Mammary epithelial cell (primary cell): ENCODE measurements at regions of chr7 and their contacts with region 1.

Region 1: GRCh38 chr7:48088559-48089045 is 463 bp upstream of the UPP1 start:
- DNase-seq: peak; percentile 92
- H3K4me3 ChIP-seq: peak overlapping the region; percentile 54 to 86 (median 62)
- H3K27ac ChIP-seq: peak overlapping the region; percentile 99
- H3K4me1 ChIP-seq: peaks cover 71% of the 10 kb centered on the region
- H3K27me3 ChIP-seq: no peaks in the 10 kb centered on the region
- CTCF ChIP-seq: no peak

Region 2: GRCh38 chr7:47600199-47601118 is 488.1 kb before region 1 on chr7:
- CTCF ChIA-PET with region 1: no interaction called
- dilution Hi-C with region 1: no loop called
- in situ Hi-C with region 1: no loop called
- intact Hi-C with region 1: loop called (anchors 5 kb)
- DNase-seq: peak; percentile 81
- H3K4me3 ChIP-seq: peak overlapping the region in 1 of 3 experiments; percentile 8
- H3K27ac ChIP-seq: peak overlapping the region; percentile 84
- H3K4me1 ChIP-seq: peaks cover 47% of the 10 kb centered on the region
- H3K27me3 ChIP-seq: no peaks in the 10 kb centered on the region
- CTCF ChIP-seq: no peak

Region 3: GRCh38 chr7:47979145-47979831 is 109.3 kb before region 1 on chr7 and contains the start of gene HUS1:
- CTCF ChIA-PET with region 1: no interaction called
- dilution Hi-C with region 1: loop called (anchors 5 kb)
- in situ Hi-C with region 1: loop called in 1 of 2 experiments (anchors 5 kb)
- intact Hi-C with region 1: loop called (anchors 1 kb)
- DNase-seq: peak; percentile 85
- H3K4me3 ChIP-seq: peak within 1 kb of the TSS; percentile 73 to 90 (median 78)
- H3K27ac ChIP-seq: peak within 1 kb of the TSS; percentile 50
- H3K4me1 ChIP-seq: peaks cover 10% of the 10 kb centered on the region
- H3K27me3 ChIP-seq: no peaks in the 10 kb centered on the region
- CTCF ChIP-seq: no peak
- total RNA-seq, gene HUS1: 31.3 to 36.8 TPM

Region 4: GRCh38 chr7:47991741-47992311 is 96.8 kb before region 1 on chr7:
- CTCF ChIA-PET with region 1: interaction called, 3 read pairs
- dilution Hi-C with region 1: no loop called
- in situ Hi-C with region 1: loop called in 1 of 2 experiments (anchors 5 kb)
- intact Hi-C with region 1: loop called (anchors 1 kb)
- DNase-seq: peak; percentile 52
- H3K4me3 ChIP-seq: peak overlapping the region; percentile 34 to 52 (median 35)
- H3K27ac ChIP-seq: no peak overlapping the region
- H3K4me1 ChIP-seq: peaks cover 7% of the 10 kb centered on the region
- H3K27me3 ChIP-seq: no peaks in the 10 kb centered on the region
- CTCF ChIP-seq: peak; percentile 32 to 62

Region 5: GRCh38 chr7:48035301-48035966 is 53.2 kb before region 1 on chr7 and contains the start of gene C7orf57:
- CTCF ChIA-PET with region 1: no interaction called
- dilution Hi-C with region 1: no loop called
- in situ Hi-C with region 1: loop called in 1 of 2 experiments (anchors 10 kb)
- intact Hi-C with region 1: loop called (anchors 2 kb)
- DNase-seq: peak; percentile 87
- H3K4me3 ChIP-seq: peak within 1 kb of the TSS; percentile 53 to 74 (median 61)
- H3K27ac ChIP-seq: peak within 1 kb of the TSS; percentile 33
- H3K4me1 ChIP-seq: peaks cover 15% of the 10 kb centered on the region
- H3K27me3 ChIP-seq: no peaks in the 10 kb centered on the region
- CTCF ChIP-seq: peak in 1 of 2 donors; percentile 25
- total RNA-seq, gene C7orf57: 0.67 to 2.0 TPM

Region 6: DNA sequence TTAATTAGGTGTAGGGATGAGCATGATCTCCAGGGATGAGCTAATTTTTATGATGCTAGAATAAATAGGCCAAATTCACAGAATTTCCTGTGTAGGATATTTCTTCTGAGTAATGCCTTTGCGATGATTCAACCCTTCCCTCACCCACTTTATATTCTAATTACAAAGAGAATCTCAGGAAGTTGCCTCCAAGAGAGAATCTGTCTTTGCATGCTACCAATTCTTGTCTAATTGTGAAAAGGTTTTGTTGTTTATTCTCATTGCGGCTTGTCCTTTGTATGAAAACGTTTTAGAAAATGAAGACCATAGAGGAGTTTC is 47.0 kb before region 1 on chr7:
- CTCF ChIA-PET with region 1: no interaction called
- dilution Hi-C with region 1: no loop called
- in situ Hi-C with region 1: loop called in 1 of 2 experiments (anchors 10 kb)
- intact Hi-C with region 1: loop called (anchors 2 kb)
- DNase-seq: peak; percentile 56
- H3K4me3 ChIP-seq: peak overlapping the region in 1 of 3 experiments; percentile 3
- H3K27ac ChIP-seq: peak overlapping the region; percentile 77
- H3K4me1 ChIP-seq: peaks cover 34% of the 10 kb centered on the region
- H3K27me3 ChIP-seq: no peaks in the 10 kb centered on the region
- CTCF ChIP-seq: no peak

Region 7: DNA sequence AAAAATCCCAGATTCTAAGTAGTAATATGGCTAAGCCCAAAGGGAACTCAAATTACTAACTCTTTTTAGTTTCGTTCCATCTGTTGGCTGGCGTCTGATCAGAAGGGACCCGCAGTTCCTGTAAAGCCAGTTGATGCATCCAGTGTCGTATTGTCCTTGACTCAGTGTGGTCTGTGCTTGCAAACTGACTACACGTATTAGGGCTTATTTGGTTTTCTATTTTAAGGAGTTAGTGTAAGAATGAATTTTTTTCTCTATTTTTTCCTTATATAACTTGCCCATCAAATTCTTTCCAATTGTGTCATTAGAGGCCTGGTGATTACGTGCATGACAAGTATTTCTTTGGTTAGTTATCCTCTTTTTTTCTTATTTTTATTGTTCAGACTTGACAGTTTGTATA is 92.4 kb after region 1 on chr7:
- CTCF ChIA-PET with region 1: no interaction called
- dilution Hi-C with region 1: no loop called
- in situ Hi-C with region 1: no loop called
- intact Hi-C with region 1: no loop called
- DNase-seq: no peak
- H3K4me3 ChIP-seq: no peak overlapping the region
- H3K27ac ChIP-seq: no peak overlapping the region
- H3K4me1 ChIP-seq: peaks cover 10% of the 10 kb centered on the region
- H3K27me3 ChIP-seq: no peaks in the 10 kb centered on the region
- CTCF ChIP-seq: no peak

Region 8: DNA sequence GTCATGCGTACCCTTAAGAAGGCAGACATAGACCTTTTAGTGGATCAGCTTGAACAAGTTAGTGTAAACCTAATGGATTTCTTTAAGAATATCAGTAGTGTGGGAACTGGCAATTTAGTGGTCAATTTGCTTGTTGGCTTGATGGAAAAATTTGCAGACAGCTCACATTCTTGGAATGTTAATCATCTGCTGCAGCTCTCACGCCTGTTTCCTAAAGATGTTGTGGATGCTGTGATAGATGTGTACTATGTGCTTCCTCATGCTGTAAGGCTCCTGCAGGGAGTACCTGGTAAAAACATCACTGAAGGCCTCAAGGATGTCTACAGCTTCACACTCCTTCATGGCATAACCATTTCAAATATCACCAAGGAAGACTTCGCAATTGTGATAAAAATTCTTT is 186.1 kb after region 1 on chr7:
- CTCF ChIA-PET with region 1: no interaction called
- dilution Hi-C with region 1: no loop called
- in situ Hi-C with region 1: no loop called
- intact Hi-C with region 1: no loop called
- DNase-seq: peak; percentile 63
- H3K4me3 ChIP-seq: no peak overlapping the region
- H3K27ac ChIP-seq: no peak overlapping the region
- H3K4me1 ChIP-seq: peaks cover 16% of the 10 kb centered on the region
- H3K27me3 ChIP-seq: no peaks in the 10 kb centered on the region
- CTCF ChIP-seq: no peak

Region 9: DNA sequence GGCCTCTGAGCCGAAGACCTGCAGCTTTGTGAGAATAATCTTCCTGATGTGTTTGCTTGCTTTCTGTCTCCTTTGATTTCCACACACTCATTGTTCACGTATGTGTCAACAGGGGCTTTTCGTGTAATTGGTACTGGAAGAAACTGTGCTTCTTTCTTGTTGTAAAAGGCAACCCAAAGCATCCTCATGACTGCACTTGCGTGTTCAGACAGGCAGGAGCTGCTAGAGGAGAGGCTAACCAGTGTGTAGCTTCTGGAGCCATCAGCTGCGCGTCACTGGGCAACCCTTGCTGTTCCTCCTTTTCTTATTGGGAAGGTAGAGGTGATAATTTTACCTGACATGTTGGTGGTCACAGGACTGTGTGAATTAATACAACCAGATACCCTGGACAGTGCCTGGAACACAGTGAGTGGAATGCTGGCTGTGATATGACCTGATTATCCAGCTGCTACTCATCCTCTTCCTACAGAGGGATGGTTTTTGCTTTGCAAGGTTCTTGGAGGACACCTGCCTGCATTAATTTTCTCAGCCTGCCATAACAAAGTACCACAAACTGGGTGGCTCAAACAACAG is 295.7 kb after region 1 on chr7:
- CTCF ChIA-PET with region 1: no interaction called
- dilution Hi-C with region 1: no loop called
- in situ Hi-C with region 1: no loop called
- intact Hi-C with region 1: no loop called
- DNase-seq: peak; percentile 69
- H3K4me3 ChIP-seq: no peak overlapping the region
- H3K27ac ChIP-seq: no peak overlapping the region
- H3K4me1 ChIP-seq: peaks cover 7% of the 10 kb centered on the region
- H3K27me3 ChIP-seq: no peaks in the 10 kb centered on the region
- CTCF ChIP-seq: peak; percentile 21 to 53